Left ventricle myocardium inferior (tissue), 1 donor: ENCODE measurements at regions of chr9 and their contacts with region 1.

Region 1: GRCh38 chr9:110623462-110624025 is 44.0 kb upstream of the SVEP1 start:
- DNase-seq: no peak
- H3K4me3 ChIP-seq: no peak overlapping the region
- H3K27ac ChIP-seq: no peak overlapping the region
- H3K4me1 ChIP-seq: no peaks in the 10 kb centered on the region
- H3K27me3 ChIP-seq: no peaks in the 10 kb centered on the region
- CTCF ChIP-seq: peak; percentile 76

Region 2: GRCh38 chr9:110452227-110452801 is 171.2 kb before region 1 on chr9:
- intact Hi-C with region 1: loop called (anchors 10 kb)
- DNase-seq: no peak
- H3K4me3 ChIP-seq: no peak overlapping the region
- H3K27ac ChIP-seq: no peak overlapping the region
- H3K4me1 ChIP-seq: no peaks in the 10 kb centered on the region
- H3K27me3 ChIP-seq: no peaks in the 10 kb centered on the region
- CTCF ChIP-seq: peak; percentile 60